HCT116 (cell line): ENCODE measurements at regions of chr1 and their contacts with region 1.

Region 1: GRCh38 chr1:111334169-111334568 is 43.5 kb downstream of the CHIA start:
- DNase-seq: peak; percentile 21
- ATAC-seq: peak; percentile 90
- H3K4me3 ChIP-seq: no peak overlapping the region
- H3K27ac ChIP-seq: no peak overlapping the region
- H3K4me1 ChIP-seq: no peaks in the 10 kb centered on the region
- H3K27me3 ChIP-seq: no peaks in the 10 kb centered on the region
- CTCF ChIP-seq: peak; percentile 63 to 81 (median 75)
- POLR2A ChIP-seq: no peak
- RAD21 ChIP-seq: peak; percentile 89

Region 2: DNA sequence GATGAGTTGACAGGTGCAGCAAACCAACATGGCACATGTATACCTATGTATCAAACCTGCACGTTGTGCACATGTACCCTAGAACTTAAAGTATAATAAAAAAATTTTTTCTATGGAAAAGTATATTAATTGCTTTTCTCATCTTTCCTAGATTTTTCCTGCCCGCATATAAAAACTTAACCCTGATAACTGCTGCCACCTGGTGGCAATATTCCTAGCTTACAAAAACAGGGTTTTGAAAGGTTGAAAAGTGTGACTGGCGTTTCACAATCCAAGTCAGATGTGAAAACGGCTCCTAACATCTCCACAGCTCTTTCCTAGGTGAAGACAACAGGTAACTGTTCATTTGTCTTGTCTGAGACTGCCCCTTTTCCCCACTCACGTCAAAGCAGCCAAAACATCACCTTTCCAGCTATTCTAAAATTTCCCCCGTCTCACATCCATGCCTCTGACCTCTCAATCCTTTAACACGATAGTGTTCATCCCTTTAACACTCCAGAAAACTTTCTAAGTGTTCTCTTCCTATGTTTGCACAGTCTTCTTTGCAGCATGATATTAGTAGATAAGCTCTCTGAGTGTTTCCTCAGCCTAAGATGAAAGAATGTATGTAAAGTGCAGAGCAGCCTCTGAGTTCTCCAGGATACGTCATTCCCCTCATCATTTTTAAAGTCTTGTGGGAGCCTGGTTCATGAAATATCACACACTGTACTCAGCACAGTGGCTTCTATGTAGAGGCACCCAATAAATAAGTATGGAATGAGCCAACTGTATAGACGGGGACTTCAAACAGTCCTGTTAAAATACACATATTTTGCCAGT is 65.8 kb after region 1 on chr1:
- CTCF ChIA-PET with region 1: interaction called, 7 read pairs
- POLR2A ChIA-PET with region 1: no interaction called
- RAD21 ChIA-PET with region 1: no interaction called
- intact Hi-C with region 1: loop called (anchors 5 kb)
- DNase-seq: peak; percentile 33
- ATAC-seq: peak; percentile 57; the same call in 1 of the 2 replicates
- H3K4me3 ChIP-seq: no peak overlapping the region
- H3K27ac ChIP-seq: no peak overlapping the region
- H3K4me1 ChIP-seq: no peaks in the 10 kb centered on the region
- H3K27me3 ChIP-seq: peaks cover 10% of the 10 kb centered on the region
- CTCF ChIP-seq: peak; percentile 54 to 64 (median 55)
- POLR2A ChIP-seq: no peak
- RAD21 ChIP-seq: peak; percentile 71

Region 3: DNA sequence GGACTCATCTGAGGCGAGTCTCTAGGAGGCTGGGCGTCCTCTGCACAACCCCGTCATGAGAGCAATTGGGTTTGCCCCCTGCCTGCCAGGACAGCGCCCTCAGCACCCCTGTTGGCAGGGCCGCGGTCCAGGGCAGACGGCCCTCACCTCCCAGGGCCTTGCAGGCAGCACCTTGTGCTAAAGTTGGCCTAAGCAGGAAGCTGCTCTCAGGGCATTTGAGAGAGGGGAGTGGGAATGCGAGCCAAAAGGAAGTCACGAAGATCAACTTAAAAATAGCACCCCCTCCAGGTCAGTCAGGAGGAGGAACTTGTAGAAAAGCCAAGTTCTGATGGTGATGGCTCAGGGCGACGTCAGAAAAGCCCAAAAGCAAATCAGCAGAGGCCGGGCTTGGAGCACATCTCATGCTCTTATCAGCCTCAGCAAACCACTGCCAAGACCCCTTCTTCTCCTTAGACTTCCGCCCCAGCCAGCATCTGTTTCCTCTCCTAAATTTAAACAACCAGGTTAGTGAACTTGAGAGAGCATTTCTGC is 181.9 kb after region 1 on chr1:
- CTCF ChIA-PET with region 1: no interaction called
- POLR2A ChIA-PET with region 1: no interaction called
- RAD21 ChIA-PET with region 1: no interaction called
- intact Hi-C with region 1: no loop called
- DNase-seq: no peak
- ATAC-seq: peak; percentile 55
- H3K4me3 ChIP-seq: no peak overlapping the region
- H3K27ac ChIP-seq: no peak overlapping the region
- H3K4me1 ChIP-seq: no peaks in the 10 kb centered on the region
- H3K27me3 ChIP-seq: no peaks in the 10 kb centered on the region
- CTCF ChIP-seq: peak in 2 of 3 experiments; percentile 29 to 38; a peak in 4 of 6 replicates
- POLR2A ChIP-seq: no peak
- RAD21 ChIP-seq: no peak